OCI-LY7 (cell line): ENCODE measurements at regions of chr2 and their contacts with region 1.

Region 1: DNA sequence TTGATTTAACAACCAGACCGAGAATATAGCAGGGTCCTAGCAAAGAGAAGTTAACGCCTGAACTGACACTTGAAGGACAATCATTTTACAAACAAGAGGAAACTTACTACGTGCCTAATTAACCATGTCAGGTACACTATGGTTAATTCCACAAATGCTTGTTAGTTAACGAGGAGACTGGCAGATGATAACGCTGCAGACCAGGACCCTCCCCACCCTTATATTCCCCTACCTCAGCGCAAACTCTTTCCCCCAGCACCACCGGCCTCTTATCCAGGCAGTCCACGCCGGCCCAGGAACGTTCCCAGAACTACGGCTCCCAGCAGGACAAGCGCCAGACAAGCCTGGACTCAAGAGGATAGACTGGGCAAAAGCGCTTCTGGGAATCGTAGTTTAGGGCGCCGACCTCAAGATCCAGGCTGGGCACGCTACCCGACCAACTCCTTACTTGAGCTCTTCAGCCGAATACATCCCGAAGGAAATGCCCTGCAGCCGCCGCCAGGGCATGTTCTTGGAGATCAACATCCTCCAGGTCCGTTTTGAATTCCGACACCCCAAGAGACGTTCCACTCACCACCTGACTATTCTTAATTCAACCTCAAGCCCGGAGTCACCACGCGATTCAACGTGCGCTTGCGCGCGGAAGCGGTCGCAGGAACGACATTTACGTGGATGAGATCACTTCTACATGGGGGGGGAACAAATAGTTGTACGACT is at the start of gene POLR1A:
- DNase-seq: peak; percentile 92
- H3K4me3 ChIP-seq: peak within 1 kb of the TSS; percentile 87
- H3K27ac ChIP-seq: peak within 1 kb of the TSS; percentile 68
- H3K4me1 ChIP-seq: peaks cover 25% of the 10 kb centered on the region
- CTCF ChIP-seq: no peak
- total RNA-seq, gene POLR1A: 17.5 and 24.0 TPM in 2 replicates

Region 2: DNA sequence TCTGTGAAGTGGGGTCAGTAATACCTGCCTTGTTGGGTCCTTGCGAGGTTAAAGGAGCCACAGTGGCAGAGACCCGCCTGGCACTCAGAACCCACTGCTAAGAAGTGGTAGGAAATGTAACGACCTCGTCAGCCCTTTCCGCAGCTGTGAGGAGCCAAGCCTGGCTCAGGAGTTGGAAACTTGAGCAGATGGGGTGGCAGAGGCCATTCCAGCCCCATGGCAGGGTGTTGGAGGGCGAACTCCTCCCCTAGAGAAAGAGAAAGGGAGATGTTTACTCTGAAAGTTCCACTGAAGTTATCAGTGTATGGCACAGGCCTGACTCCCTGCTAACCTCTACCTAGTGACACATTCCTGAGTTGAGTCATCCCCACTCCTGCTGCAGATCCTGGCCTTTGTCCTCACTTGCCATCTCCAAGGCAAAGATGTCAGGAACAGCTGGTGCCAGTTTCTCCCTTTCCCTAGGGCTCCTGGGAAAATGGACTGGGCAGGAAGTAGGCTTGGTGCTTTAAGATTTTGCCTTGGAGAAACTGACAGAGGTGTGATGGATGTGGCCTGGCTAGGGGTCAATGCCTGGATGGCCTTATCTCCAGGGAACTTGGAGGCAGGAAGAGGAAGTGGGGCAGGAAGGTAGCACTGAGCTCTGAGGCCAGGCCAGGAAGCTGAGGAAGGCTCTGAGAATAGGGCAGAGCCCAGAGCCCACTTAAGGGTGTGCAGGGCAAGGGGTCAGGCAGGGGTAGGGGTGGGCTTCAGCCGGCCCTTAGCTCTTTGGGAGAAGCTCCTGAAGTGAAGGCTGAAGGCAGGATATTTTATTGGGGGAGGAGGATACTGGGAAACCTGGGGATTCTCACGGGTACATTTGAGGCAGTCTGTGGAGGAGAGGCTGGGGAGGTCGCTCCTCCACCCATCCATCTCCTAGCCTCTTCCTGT is 520.3 kb before region 1 on chr2:
- CTCF ChIA-PET with region 1: no interaction called
- POLR2A ChIA-PET with region 1: no interaction called
- intact Hi-C with region 1: no loop called
- DNase-seq: no peak
- H3K4me3 ChIP-seq: no peak overlapping the region
- H3K27ac ChIP-seq: no peak overlapping the region
- H3K4me1 ChIP-seq: peaks cover 13% of the 10 kb centered on the region
- CTCF ChIP-seq: no peak

Region 3: DNA sequence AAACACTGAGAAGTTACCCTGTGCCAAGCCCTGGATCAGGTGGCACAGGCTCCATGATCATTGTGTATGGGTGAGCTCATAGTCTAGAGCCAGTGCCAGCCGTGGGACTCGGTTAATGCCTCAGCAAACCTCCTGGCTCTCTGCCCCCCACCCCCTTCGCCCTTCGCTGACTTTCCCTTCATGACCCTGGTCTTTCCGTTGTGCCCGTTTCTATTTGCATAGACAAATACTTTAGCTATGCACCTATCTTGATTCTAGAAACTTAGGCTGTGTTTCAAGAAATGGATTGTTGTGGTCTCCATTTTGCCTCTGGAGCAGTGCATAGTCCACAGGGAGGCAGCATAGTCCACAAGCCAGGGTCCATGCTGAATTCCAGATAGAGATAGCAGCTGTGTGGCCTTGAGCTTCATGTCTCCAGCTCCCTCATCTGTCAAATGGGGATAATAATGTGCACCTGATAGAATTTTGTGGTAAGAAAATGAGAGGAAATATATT is 290.9 kb after region 1 on chr2:
- CTCF ChIA-PET with region 1: no interaction called
- POLR2A ChIA-PET with region 1: no interaction called
- intact Hi-C with region 1: no loop called
- DNase-seq: peak; percentile 11
- H3K4me3 ChIP-seq: no peak overlapping the region
- H3K27ac ChIP-seq: no peak overlapping the region
- H3K4me1 ChIP-seq: peaks cover 25% of the 10 kb centered on the region
- CTCF ChIP-seq: peak; percentile 63

Region 4: DNA sequence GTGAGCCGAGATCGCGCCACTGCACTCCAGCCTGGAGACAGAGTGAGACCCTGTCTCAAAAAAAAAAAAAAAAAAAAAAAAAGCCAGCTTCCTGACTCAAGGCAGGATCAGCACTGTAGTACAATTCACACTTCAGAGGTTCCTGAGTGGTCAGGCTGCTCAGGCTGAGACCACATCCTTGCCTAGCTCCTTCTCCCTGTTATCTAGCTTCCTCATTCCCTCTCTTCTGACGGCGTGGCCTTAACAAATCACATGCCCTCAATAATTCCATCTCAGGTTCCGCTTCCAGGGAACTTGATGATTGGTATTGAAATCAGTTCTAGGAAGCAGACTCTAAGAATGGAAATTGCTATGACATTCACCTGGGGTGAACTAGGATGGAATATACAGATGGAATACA is 306.0 kb after region 1 on chr2:
- CTCF ChIA-PET with region 1: no interaction called
- POLR2A ChIA-PET with region 1: no interaction called
- intact Hi-C with region 1: no loop called
- DNase-seq: no peak
- H3K4me3 ChIP-seq: no peak overlapping the region
- H3K27ac ChIP-seq: no peak overlapping the region
- H3K4me1 ChIP-seq: no peaks in the 10 kb centered on the region
- CTCF ChIP-seq: no peak

Region 5: DNA sequence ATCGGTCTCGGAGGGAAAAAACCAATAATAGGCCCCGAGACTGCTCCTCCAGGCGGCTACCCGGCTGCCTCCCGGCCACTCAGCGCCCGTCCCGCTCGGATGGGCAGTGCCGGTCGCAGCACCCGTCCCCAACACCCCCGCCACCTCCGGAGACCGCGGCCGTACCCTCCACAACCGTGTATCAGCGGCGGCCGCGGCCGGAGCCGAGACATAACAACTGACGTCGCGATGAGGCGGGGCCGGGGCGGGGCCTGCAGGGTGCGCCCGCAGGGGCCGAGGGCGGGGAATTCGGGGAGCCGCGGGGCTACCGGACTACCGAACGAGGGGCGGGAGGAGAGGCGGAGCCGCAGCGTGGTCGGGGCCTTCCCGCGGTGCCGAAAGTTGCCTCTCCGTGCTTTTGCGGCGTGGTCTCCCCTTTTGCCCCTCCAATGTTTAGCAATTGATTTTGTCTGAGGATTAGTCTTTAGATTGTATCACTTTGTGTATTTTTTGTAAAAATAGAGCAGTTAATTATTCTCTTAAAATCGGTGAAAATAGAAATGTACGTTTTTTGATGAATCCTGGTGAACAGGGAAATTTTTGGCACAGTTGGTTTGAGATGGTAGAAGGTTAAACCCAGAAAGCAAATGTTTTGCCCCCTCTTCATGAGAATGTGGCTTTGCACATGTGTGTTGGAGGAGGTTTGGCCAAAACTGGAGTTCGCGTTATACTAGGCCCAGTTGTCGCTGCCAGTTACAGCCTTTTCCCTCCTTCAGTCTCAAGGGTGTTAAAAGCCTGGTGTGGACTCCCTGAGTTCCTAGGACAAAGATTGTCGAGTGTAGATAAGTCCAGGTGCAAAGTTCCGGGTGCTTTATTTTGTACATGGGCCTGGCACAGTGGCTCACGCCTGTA is 518.5 kb after region 1 on chr2 and contains the start of gene RNF103:
- CTCF ChIA-PET with region 1: no interaction called
- POLR2A ChIA-PET with region 1: no interaction called
- intact Hi-C with region 1: loop called (anchors 5 kb)
- DNase-seq: peak; percentile 93
- H3K4me3 ChIP-seq: peak within 1 kb of the TSS; percentile 94
- H3K27ac ChIP-seq: peak within 1 kb of the TSS; percentile 78
- H3K4me1 ChIP-seq: peaks cover 20% of the 10 kb centered on the region
- CTCF ChIP-seq: no peak
- total RNA-seq, gene RNF103: 11.8 and 12.9 TPM in 2 replicates